Activated CD8-positive, alpha-beta T cell treated with anti-CD3 and anti-CD28 coated beads, Interleukin-2, amount 10 ng/mL, durations not matched to agents 7 days and 5 days (primary cell): ENCODE measurements at regions of chr11 and their contacts with region 1.

Region 1: GRCh38 chr11:118216621-118217481 is 8.0 kb downstream of the JAML start:
- DNase-seq: peak; percentile 56
- ATAC-seq: peak; percentile 52
- H3K4me3 Mint-ChIP-seq: peak overlapping the region; percentile 76
- H3K27ac Mint-ChIP-seq: peak overlapping the region; percentile 94
- H3K4me1 Mint-ChIP-seq: peaks cover 98% of the 10 kb centered on the region
- H3K27me3 Mint-ChIP-seq: no peaks in the 10 kb centered on the region

Region 2: DNA sequence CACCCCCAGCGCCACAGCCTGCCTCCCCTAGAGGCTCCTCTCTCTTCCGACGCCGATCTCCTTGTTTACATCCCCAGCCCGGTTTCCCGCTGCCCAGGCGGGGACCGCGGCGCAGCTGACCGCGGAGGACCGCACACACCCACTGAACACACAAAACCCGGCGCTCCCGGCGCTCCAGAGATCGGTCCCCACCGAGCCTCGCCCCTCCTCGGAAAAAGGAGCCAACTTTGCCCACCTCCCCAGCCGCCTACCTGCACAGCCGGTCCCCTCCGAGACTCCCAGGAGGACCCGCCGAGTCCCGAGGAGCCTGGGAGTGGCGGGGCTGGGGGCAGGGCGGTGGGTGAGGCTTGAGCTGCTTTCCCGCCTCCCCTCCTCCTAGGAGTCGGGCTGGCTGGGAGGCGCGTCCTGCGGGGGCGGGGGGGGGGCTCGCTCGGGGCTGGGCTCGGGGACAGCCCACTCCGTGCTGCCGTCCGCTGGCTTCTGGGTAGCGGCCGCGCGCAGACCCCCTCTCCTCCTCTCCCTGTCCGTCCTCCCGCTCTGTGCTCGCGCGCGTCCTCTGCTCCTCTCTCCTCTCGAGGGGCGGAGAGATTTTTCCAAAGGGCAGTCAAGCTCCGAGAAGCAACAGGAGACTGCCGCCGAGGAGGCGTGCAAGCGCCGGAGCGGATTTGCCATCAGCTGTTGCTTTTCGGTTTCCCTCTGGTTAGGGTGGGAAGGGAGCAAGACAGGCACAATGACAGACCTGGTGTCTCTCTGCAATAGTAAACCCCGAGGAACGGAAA is 340.3 kb before region 1 on chr11 and contains the start of gene FXYD6:
- CTCF ChIA-PET with region 1: no interaction called
- POLR2A ChIA-PET with region 1: no interaction called
- DNase-seq: no peak
- ATAC-seq: peak; percentile 24
- H3K4me3 Mint-ChIP-seq: peak within 1 kb of the TSS; percentile 75
- H3K27ac Mint-ChIP-seq: peak within 1 kb of the TSS; percentile 28
- H3K4me1 Mint-ChIP-seq: peaks cover 50% of the 10 kb centered on the region
- H3K27me3 Mint-ChIP-seq: peaks cover 62% of the 10 kb centered on the region
- total RNA-seq, gene FXYD6: 0.24 TPM in 1 of 2 experiments, not detected in the other

Region 3: DNA sequence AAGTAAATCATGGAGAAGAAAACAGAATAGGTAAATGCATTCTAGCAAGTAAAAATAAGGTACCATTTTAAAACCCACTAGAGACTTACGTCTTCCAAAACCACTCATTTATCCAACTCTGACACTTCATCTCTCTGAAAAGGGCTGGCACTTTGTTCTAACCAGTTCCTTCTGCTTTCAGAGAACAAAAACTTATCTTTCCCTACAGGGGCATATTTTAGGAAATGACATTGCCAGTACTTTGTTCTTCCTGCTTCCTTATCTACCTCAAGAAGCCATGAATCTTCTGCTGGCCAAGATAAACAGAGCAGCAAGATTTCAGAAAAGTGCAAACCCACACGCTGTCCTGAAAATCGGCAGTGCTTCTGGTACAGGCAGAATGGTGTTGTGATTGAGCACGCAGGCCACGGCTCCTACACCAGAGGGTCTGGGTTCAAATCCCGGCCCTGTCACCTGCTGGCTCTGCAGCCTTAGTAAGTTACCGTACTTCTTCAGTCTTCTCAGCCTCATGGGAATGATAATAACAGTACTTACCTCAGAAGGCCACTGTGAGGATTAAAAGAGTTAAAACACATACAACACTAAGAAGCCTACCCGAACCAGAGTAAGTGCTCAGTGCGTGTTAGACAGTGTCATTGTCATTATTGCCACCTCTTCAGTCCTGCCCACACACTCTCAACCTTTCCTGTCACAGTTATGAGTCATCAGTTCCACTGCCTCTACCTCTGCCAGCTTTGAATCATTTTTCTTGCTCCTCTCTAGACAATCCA is 24.3 kb after region 1 on chr11:
- CTCF ChIA-PET with region 1: interaction called, 16 read pairs
- POLR2A ChIA-PET with region 1: interaction called, 86 read pairs
- DNase-seq: peak; percentile 81
- ATAC-seq: peak; percentile 89
- H3K4me3 Mint-ChIP-seq: peak overlapping the region; percentile 71
- H3K27ac Mint-ChIP-seq: peak overlapping the region; percentile 88
- H3K4me1 Mint-ChIP-seq: peaks cover 92% of the 10 kb centered on the region
- H3K27me3 Mint-ChIP-seq: no peaks in the 10 kb centered on the region

Region 4: DNA sequence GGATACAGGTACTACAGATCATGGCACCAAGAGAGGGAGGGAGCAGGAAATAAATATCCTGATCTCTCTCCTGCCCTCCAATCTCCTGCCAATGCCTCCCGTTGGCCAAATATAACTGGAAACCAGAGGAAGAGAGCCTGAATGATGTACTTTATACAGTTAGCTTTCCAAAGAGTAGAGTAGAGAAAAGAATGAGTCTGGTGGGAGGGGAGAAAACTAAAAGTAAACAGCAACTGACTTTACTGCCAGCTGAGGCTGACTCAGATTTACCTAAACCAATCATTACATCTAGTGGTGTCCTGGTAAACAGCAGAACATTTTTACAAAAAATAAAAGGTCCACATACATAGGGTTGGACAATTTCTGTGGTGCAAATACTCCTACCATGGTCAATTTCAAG is 30.2 kb after region 1 on chr11:
- CTCF ChIA-PET with region 1: interaction called, 16 read pairs
- POLR2A ChIA-PET with region 1: interaction called, 86 read pairs
- DNase-seq: peak; percentile 25
- ATAC-seq: peak; percentile 21
- H3K4me3 Mint-ChIP-seq: no peak overlapping the region
- H3K27ac Mint-ChIP-seq: peak overlapping the region; percentile 78
- H3K4me1 Mint-ChIP-seq: peaks cover 74% of the 10 kb centered on the region
- H3K27me3 Mint-ChIP-seq: no peaks in the 10 kb centered on the region

Region 5: GRCh38 chr11:118251858-118252652 is 35.2 kb after region 1 on chr11 and contains the start of gene MPZL3:
- CTCF ChIA-PET with region 1: interaction called, 16 read pairs
- POLR2A ChIA-PET with region 1: interaction called, 16 read pairs
- DNase-seq: peak; percentile 90
- ATAC-seq: peak; percentile 79
- H3K4me3 Mint-ChIP-seq: peak within 1 kb of the TSS; percentile 94
- H3K27ac Mint-ChIP-seq: peak within 1 kb of the TSS; percentile 99
- H3K4me1 Mint-ChIP-seq: peaks cover 42% of the 10 kb centered on the region
- H3K27me3 Mint-ChIP-seq: no peaks in the 10 kb centered on the region
- total RNA-seq, gene MPZL3: 19.6 to 20.0 TPM